ENCODE measurements at regions of chr11 and their contacts with region 1.

Region 1: DNA sequence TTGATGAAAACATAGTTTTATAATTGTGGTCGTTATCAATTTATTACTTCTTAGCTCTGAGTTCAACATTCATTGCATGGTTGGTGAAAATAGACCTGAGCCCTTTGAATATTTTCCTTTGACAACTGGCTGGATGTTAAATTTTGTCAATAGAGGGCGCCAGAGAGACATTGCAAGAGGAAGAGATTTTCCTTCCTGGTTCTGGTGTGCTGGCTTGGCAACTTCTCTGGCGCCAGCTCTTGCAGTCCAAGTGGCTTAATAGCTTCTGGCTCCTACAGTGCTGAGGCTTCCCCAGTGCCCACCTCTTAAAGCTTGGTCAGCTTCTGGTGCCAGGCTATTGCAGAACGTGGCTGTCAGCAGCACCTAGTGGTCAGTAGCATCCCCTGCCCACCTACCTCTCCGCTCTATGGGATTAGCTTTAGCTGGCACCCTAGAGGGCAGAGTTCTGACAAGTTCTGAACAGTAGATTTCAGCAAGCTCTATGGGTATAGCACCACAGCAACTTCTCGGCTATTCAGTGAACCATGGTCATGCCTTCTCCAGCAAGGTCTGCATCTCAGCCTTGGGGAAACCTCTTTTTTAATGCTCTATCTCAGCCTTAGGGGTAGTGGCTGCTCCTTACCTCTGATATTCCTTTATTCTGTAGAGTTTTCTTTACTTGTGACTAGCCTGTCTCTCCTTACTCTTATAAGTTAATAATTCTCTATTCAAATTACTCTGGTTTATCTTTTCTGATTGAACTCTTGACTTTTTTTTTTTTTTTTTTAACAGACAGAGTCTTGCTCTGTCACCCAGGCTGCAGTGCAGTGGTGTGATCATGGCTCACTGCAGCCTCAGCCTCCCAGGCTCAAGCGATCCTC is 59.4 kb downstream of the ACER3 start:
- DNase-seq: peak; percentile 79
- ATAC-seq: peak; percentile 85
- H3K4me3 ChIP-seq: no peak overlapping the region
- H3K27ac ChIP-seq: no peak overlapping the region
- H3K4me1 ChIP-seq: peaks cover 13% of the 10 kb centered on the region
- H3K27me3 ChIP-seq: no peaks in the 10 kb centered on the region
- CTCF ChIP-seq: peak; percentile 84
- EP300 ChIP-seq: no peak
- POLR2A ChIP-seq: no peak
- RAD21 ChIP-seq: peak; percentile 67

Region 2: GRCh38 chr11:76577199-76577920 is 342.8 kb before region 1 on chr11:
- CTCF ChIA-PET with region 1: no interaction called
- POLR2A ChIA-PET with region 1: no interaction called
- in situ Hi-C with region 1: no loop called
- intact Hi-C with region 1: no loop called
- DNase-seq: no peak
- ATAC-seq: peak; percentile 60
- H3K4me3 ChIP-seq: no peak overlapping the region
- H3K27ac ChIP-seq: no peak overlapping the region
- H3K4me1 ChIP-seq: 0 out of 2 replicates have a peak, but pooled peaks cover 7% of the 10 kb centered on the region
- H3K27me3 ChIP-seq: peaks cover 0 to 15% of the 10 kb centered on the region in 2 experiments; a peak in 3 of 5 replicates
- CTCF ChIP-seq: no peak
- EP300 ChIP-seq: no peak
- POLR2A ChIP-seq: no peak
- RAD21 ChIP-seq: no peak

Region 3: GRCh38 chr11:76670485-76671236 is 249.5 kb before region 1 on chr11 and contains the start of gene LRRC32:
- CTCF ChIA-PET with region 1: no interaction called
- POLR2A ChIA-PET with region 1: no interaction called
- in situ Hi-C with region 1: no loop called
- intact Hi-C with region 1: no loop called
- DNase-seq: no peak
- ATAC-seq: no peak
- H3K4me3 ChIP-seq: no peak within 1 kb of the TSS
- H3K27ac ChIP-seq: no peak within 1 kb of the TSS
- H3K4me1 ChIP-seq: peaks cover 15% of the 10 kb centered on the region
- H3K27me3 ChIP-seq: peaks cover 2 to 53% of the 10 kb centered on the region in 2 experiments; a peak in 4 of 5 replicates
- CTCF ChIP-seq: no peak
- EP300 ChIP-seq: no peak
- POLR2A ChIP-seq: no peak
- RAD21 ChIP-seq: no peak
- total RNA-seq, gene LRRC32: not detected in 2 replicates

Region 4: GRCh38 chr11:76721755-76722677 is 198.1 kb before region 1 on chr11:
- CTCF ChIA-PET with region 1: interaction called, 11 read pairs
- POLR2A ChIA-PET with region 1: no interaction called
- in situ Hi-C with region 1: no loop called
- intact Hi-C with region 1: loop called (anchors 5 kb)
- DNase-seq: peak; percentile 58
- ATAC-seq: peak; percentile 94
- H3K4me3 ChIP-seq: peak overlapping the region in 1 of 3 experiments; percentile 41; a peak in 1 of 6 replicates
- H3K27ac ChIP-seq: no peak overlapping the region
- H3K4me1 ChIP-seq: peaks cover 5% of the 10 kb centered on the region; the same call in 1 of the 2 replicates
- H3K27me3 ChIP-seq: peaks cover 0 to 18% of the 10 kb centered on the region in 2 experiments; a peak in 3 of 5 replicates
- CTCF ChIP-seq: peak; percentile 93
- EP300 ChIP-seq: no peak
- POLR2A ChIP-seq: no peak
- RAD21 ChIP-seq: peak; percentile 65; the same call in 1 of the 2 replicates

Region 5: GRCh38 chr11:76807206-76807875 is 112.8 kb before region 1 on chr11:
- CTCF ChIA-PET with region 1: interaction called, 28 read pairs
- POLR2A ChIA-PET with region 1: no interaction called
- in situ Hi-C with region 1: loop called (anchors 5 kb)
- intact Hi-C with region 1: loop called (anchors 1 kb)
- DNase-seq: peak; percentile 68
- ATAC-seq: peak; percentile 93
- H3K4me3 ChIP-seq: peak overlapping the region in 1 of 3 experiments; percentile 20; a peak in 1 of 6 replicates
- H3K27ac ChIP-seq: no peak overlapping the region
- H3K4me1 ChIP-seq: peaks cover 22% of the 10 kb centered on the region
- H3K27me3 ChIP-seq: peaks cover 6 to 19% of the 10 kb centered on the region in 2 experiments; a peak in 4 of 5 replicates
- CTCF ChIP-seq: peak; percentile 92
- EP300 ChIP-seq: no peak
- POLR2A ChIP-seq: no peak
- RAD21 ChIP-seq: peak; percentile 67

Region 6: DNA sequence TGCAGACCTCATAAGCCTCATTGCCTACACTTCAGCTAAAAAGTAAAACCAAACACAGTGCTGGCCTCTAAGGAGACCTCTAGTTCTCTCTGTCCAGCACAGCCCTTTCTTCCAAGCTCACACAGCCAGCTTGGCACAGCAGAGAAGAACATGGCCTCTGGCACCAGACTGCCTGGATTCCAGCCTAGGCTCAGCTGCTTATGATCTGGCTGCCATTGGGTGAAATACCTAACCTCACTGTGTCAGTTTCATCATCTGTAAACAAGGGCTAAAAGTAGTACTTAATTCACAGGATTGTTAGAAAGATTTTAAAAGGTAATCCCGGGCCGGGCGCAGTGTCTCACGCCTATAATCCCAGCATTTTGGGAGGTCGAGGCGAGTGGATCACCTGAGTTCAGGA is 69.3 kb before region 1 on chr11:
- CTCF ChIA-PET with region 1: no interaction called
- POLR2A ChIA-PET with region 1: no interaction called
- in situ Hi-C with region 1: no loop called
- intact Hi-C with region 1: no loop called
- DNase-seq: no peak
- ATAC-seq: no peak
- H3K4me3 ChIP-seq: no peak overlapping the region
- H3K27ac ChIP-seq: no peak overlapping the region
- H3K4me1 ChIP-seq: peaks cover 19% of the 10 kb centered on the region
- H3K27me3 ChIP-seq: peaks cover 3 to 7% of the 10 kb centered on the region in 2 experiments; a peak in 3 of 5 replicates
- CTCF ChIP-seq: no peak
- EP300 ChIP-seq: no peak
- POLR2A ChIP-seq: no peak
- RAD21 ChIP-seq: no peak

Region 7: DNA sequence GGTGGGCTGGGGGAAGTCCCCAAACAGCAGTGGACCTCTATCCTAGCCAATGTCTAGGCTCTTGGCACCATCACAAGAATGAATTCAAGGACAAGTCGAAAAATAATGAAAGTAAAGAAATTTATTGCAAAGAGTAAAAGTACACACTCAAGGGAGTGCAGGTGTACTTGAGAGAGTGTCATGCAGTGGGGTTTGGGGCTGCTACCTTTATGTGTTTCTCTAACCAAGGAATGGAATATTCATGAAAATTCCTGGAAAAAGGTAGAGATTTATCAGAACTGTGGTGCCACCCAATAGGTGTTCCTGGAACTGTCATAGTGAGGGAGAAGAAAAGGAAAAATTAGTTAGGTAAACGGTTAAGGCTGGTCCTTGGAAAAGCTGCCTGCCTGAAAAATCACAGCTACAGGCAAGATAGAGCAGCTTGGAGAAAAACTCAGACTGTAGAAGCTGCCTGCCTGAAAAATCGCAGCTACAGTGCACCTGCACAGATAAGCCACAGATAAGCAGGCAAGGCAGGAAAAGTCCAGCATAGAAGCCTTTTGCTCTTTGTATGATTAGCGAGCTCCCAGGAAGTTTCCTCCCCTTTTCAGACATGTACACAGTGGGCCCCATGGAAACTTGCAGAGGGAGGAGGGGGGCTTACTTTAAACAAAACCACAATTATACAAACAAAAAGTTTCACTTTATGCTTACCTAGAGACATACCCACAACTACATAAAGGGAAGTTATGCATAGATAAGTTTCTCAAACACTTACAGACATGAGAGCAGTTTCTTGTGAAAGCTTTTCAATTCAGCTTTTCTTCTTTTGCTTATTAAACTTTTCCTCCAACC is 42.7 kb after region 1 on chr11:
- CTCF ChIA-PET with region 1: no interaction called
- POLR2A ChIA-PET with region 1: no interaction called
- in situ Hi-C with region 1: no loop called
- intact Hi-C with region 1: loop called (anchors 1 kb)
- DNase-seq: peak; percentile 95
- ATAC-seq: peak; percentile 100
- H3K4me3 ChIP-seq: peak overlapping the region in 1 of 3 experiments; percentile 14; a peak in 1 of 6 replicates
- H3K27ac ChIP-seq: peak overlapping the region; percentile 57
- H3K4me1 ChIP-seq: peaks cover 20% of the 10 kb centered on the region
- H3K27me3 ChIP-seq: no peaks in the 10 kb centered on the region
- CTCF ChIP-seq: no peak
- EP300 ChIP-seq: peak in 1 of 2 experiments; percentile 92; a peak in 2 of 4 replicates
- POLR2A ChIP-seq: no peak
- RAD21 ChIP-seq: no peak

Region 8: DNA sequence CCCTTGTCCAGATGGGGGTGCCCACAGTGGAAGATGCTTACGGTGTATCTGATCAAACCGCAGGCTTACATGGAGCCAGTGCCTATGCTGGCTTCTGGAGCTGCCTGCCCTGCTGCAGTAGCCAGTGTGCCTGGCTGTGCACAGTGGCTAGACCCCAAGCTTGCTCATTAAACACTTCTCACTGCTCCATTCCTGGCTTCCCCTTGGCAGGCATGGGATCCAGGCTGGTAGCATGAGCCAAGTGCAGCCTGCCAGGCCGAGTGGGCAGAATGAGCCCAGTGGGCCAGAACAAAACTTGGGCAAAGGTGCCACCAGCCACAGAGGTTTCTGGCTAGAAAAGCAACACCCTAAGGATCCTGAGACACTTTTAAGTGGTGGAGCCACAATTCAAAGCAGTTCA is 58.7 kb after region 1 on chr11:
- CTCF ChIA-PET with region 1: no interaction called
- POLR2A ChIA-PET with region 1: no interaction called
- in situ Hi-C with region 1: no loop called
- intact Hi-C with region 1: no loop called
- DNase-seq: no peak
- ATAC-seq: no peak
- H3K4me3 ChIP-seq: no peak overlapping the region
- H3K27ac ChIP-seq: no peak overlapping the region
- H3K4me1 ChIP-seq: no peaks in the 10 kb centered on the region
- H3K27me3 ChIP-seq: no peaks in the 10 kb centered on the region
- CTCF ChIP-seq: no peak
- EP300 ChIP-seq: no peak
- POLR2A ChIP-seq: no peak
- RAD21 ChIP-seq: no peak

Region 9: DNA sequence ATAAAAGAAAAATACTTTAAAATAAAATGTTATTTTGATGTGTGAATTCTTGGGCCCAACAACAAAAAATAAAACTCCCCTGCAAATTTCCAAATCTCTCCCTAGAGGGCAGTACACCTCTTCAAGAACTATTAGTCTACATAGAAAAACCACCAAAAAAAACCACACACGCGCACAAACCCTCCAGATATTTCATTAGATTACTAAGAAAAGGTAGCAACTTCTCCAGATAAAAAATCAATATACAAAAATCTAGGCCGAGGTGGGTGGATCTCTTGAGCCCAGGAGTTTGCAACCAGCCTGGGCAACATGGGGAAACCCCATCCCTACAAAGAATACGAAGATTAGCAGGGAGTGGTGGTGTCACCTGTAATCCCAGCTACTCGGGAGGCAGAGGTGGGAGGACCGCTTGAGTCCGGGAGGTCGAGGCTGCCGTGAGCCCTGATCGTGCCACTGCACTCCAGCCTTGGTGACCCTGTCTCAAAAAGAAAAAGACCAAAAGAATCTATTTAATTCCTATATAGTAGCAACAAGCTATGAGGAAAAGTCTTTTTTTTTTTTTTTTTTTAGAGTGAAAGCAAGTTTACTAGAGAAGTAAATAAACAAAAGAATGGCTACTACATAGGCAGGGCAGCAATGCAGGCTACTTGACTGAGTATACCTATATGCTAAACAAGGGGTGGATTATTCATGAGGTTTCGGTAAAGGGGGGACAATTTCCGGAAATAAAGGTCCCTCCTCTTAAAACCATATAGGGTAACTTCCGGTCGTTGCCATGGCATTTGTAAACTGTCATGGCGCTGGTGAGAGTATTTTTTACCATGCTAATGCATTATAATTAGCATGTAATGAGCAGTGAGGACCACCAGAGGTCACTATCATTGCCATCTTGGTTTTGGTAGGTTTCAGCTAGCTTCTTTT is 127.2 kb after region 1 on chr11:
- CTCF ChIA-PET with region 1: interaction called, 40 read pairs
- POLR2A ChIA-PET with region 1: no interaction called
- in situ Hi-C with region 1: loop called (anchors 25 kb)
- intact Hi-C with region 1: loop called (anchors 1 kb)
- DNase-seq: peak; percentile 91
- ATAC-seq: peak; percentile 79
- H3K4me3 ChIP-seq: peak overlapping the region; percentile 14 to 62 (median 57); a peak in 3 of 6 replicates
- H3K27ac ChIP-seq: no peak overlapping the region
- H3K4me1 ChIP-seq: peaks cover 38% of the 10 kb centered on the region
- H3K27me3 ChIP-seq: peaks cover 0 to 23% of the 10 kb centered on the region in 2 experiments; a peak in 3 of 5 replicates
- CTCF ChIP-seq: peak; percentile 65
- EP300 ChIP-seq: no peak
- POLR2A ChIP-seq: no peak
- RAD21 ChIP-seq: peak; percentile 42; the same call in 1 of the 2 replicates